MCF 10A (cell line): ENCODE measurements at regions of chr22 and their contacts with region 1.

Region 1: GRCh38 chr22:36506637-36507517 is at the start of gene FOXRED2:
- DNase-seq: peak; percentile 81
- H3K4me3 Mint-ChIP-seq: peak within 1 kb of the TSS; percentile 77
- H3K27ac Mint-ChIP-seq: peak within 1 kb of the TSS; percentile 49
- H3K4me1 Mint-ChIP-seq: peaks cover 13% of the 10 kb centered on the region
- H3K27me3 Mint-ChIP-seq: no peaks in the 10 kb centered on the region
- CTCF ChIP-seq: no peak
- total RNA-seq, gene FOXRED2: 10.9 and 11.4 TPM in 2 replicates

Region 2: GRCh38 chr22:36481393-36482168 is 25.3 kb before region 1 on chr22 and contains the start of gene TXN2:
- CTCF ChIA-PET with region 1: interaction called, 5 read pairs
- POLR2A ChIA-PET with region 1: interaction called, 22 read pairs
- intact Hi-C with region 1: no loop called
- DNase-seq: peak; percentile 97
- H3K4me3 Mint-ChIP-seq: peak within 1 kb of the TSS; percentile 96
- H3K27ac Mint-ChIP-seq: peak within 1 kb of the TSS; percentile 91
- H3K4me1 Mint-ChIP-seq: peaks cover 10% of the 10 kb centered on the region
- H3K27me3 Mint-ChIP-seq: no peaks in the 10 kb centered on the region
- CTCF ChIP-seq: no peak
- total RNA-seq, gene TXN2: 61.5 and 83.2 TPM in 2 replicates

Region 3: DNA sequence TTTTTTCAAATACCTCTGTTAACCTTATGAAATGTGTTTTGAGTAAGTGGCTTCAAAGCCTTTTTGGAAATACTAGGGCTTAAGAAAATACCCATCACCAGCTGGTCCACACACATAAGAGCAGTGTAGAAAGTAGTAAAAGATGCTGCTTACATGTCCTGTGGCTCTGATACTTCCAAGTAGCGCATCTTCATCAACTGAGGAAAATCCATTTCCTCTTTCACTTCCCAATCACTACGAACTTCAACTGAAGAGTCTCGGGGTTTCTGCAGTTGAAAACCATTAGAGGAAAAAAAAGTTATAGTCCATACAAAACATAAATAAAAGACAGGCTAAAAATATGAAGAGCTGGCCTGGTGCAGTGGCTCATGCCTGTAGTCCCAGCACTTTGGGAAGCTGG is 13.5 kb after region 1 on chr22:
- CTCF ChIA-PET with region 1: interaction called, 29 read pairs
- POLR2A ChIA-PET with region 1: interaction called, 44 read pairs
- intact Hi-C with region 1: no loop called
- DNase-seq: no peak
- H3K4me3 Mint-ChIP-seq: no peak overlapping the region
- H3K27ac Mint-ChIP-seq: no peak overlapping the region
- H3K4me1 Mint-ChIP-seq: no peaks in the 10 kb centered on the region
- H3K27me3 Mint-ChIP-seq: no peaks in the 10 kb centered on the region
- CTCF ChIP-seq: no peak

Region 4: DNA sequence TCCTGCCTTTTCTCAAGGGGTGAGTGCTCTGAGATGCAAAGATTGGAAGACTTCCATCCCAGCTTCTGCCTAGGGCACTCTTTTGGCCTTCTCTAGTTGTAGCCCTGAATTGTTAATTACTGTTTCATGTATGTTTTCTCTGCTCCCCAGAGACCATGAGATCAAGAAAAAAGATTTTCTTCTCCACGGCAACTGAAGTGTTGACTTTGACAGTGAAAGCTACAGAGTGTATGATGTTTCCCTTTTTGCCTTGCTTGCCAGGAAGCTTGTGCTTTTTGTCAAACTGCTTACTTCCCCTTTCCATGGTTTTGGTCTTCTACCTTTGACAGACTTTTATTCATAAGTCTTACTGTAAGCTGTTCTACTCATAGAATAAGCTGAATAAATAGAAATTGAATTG is 45.4 kb after region 1 on chr22:
- CTCF ChIA-PET with region 1: no interaction called
- POLR2A ChIA-PET with region 1: no interaction called
- intact Hi-C with region 1: no loop called
- DNase-seq: no peak
- H3K4me3 Mint-ChIP-seq: no peak overlapping the region
- H3K27ac Mint-ChIP-seq: no peak overlapping the region
- H3K4me1 Mint-ChIP-seq: peaks cover 3% of the 10 kb centered on the region
- H3K27me3 Mint-ChIP-seq: peaks cover 38% of the 10 kb centered on the region
- CTCF ChIP-seq: no peak

Region 5: DNA sequence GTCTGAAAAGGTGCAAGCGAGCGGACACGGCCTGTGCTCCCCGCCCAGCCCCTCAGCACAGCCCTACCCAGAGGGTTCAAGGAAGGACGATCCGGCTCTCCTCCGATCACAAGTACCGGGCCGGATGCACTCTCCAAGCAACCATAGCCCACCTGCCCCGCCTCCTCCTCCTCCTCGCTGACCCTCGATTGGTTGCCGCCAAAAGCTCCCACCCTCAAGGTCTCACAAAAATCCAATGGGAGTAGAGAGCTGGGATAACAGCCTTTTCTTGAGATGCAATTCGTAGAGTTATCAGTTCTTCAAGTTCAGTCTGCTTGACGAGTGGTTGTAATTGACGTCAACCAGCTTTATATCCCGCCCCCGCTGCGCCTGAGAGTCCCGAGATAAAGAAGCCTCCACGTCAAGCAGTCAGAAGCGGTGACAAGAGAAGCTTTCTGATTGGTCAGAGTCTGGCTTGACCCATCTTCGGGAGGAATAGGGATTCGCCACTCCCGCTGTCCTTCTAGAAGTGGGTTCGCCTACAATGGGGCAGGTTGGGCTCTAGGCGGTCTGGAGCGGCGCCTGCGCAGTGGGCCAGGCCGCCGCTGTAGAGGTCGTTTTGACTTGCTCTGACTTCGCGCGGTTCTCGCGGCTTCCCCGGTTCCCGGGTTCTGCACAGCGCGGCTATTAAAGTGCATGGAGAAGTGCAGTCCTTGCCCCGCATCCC is 269.2 kb after region 1 on chr22 and contains the start of gene IFT27:
- CTCF ChIA-PET with region 1: interaction called, 15 read pairs
- POLR2A ChIA-PET with region 1: interaction called, 7 read pairs
- intact Hi-C with region 1: no loop called
- DNase-seq: peak; percentile 100
- H3K4me3 Mint-ChIP-seq: peak within 1 kb of the TSS; percentile 84
- H3K27ac Mint-ChIP-seq: peak within 1 kb of the TSS; percentile 79
- H3K4me1 Mint-ChIP-seq: peaks cover 6% of the 10 kb centered on the region
- H3K27me3 Mint-ChIP-seq: no peaks in the 10 kb centered on the region
- CTCF ChIP-seq: no peak
- total RNA-seq, gene IFT27: 17.6 and 28.7 TPM in 2 replicates